SK-N-SH (cell line): ENCODE measurements at regions of chr2 and their contacts with region 1.

Region 1: GRCh38 chr2:6741239-6741638 is 124.5 kb downstream of the CMPK2 start:
- DNase-seq: no peak
- H3K4me3 ChIP-seq: no peak overlapping the region
- H3K27ac ChIP-seq: no peak overlapping the region
- H3K4me1 ChIP-seq: peaks cover 0 to 7% of the 10 kb centered on the region in 2 experiments; a peak in 2 of 4 replicates
- H3K27me3 ChIP-seq: no peaks in the 10 kb centered on the region
- CTCF ChIP-seq: no peak
- EP300 ChIP-seq: no peak
- RAD21 ChIP-seq: no peak

Region 2: DNA sequence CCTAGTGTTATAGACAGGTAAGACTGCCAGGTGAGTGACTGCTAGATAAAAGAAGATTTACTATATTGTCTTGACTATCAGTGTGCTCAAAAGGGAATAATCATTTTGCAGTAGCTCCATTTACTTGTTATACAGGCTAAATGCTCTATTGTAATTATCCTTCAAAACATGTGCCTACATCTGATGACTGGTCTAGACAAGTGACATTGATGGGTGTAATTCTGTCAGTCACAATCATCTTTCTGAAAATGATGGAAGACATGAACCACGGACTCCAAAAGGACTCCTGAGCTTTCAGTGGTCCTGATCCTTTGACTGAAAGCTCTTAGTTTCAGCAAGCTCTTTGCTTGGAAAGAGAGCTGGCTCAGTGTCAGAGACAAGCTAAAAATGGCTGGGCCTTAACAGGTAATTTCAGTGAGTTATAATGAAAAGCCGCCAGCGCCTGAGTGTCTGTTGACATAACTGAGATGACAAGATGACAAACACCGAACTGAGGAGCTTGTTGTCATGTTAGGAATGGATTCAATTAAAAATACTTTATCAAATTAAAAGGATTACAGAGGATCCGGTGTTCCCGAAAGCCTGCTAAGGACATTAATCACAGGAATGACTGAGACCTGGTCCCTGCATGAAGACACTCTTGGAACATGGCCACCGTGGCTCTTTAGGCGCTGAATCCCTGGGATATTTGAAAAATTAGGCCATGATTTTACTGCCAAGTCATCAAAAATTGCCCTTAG is 17.2 kb before region 1 on chr2:
- CTCF ChIA-PET with region 1: interaction called, 11 read pairs
- POLR2A ChIA-PET with region 1: no interaction called
- DNase-seq: peak; percentile 54
- H3K4me3 ChIP-seq: no peak overlapping the region
- H3K27ac ChIP-seq: no peak overlapping the region; a peak in 1 of 4 replicates
- H3K4me1 ChIP-seq: peaks cover 0 to 8% of the 10 kb centered on the region in 2 experiments; a peak in 2 of 4 replicates
- H3K27me3 ChIP-seq: no peaks in the 10 kb centered on the region
- CTCF ChIP-seq: no peak
- EP300 ChIP-seq: peak in 1 of 2 experiments; percentile 86; a peak in 2 of 4 replicates
- RAD21 ChIP-seq: no peak

Region 3: GRCh38 chr2:6764968-6765723 is 23.9 kb after region 1 on chr2:
- CTCF ChIA-PET with region 1: no interaction called
- POLR2A ChIA-PET with region 1: no interaction called
- DNase-seq: no peak
- H3K4me3 ChIP-seq: no peak overlapping the region
- H3K27ac ChIP-seq: no peak overlapping the region
- H3K4me1 ChIP-seq: no peaks in the 10 kb centered on the region
- H3K27me3 ChIP-seq: no peaks in the 10 kb centered on the region
- CTCF ChIP-seq: no peak
- EP300 ChIP-seq: no peak
- RAD21 ChIP-seq: no peak